Colonic mucosa (tissue), 4 donors: ENCODE measurements at regions of chr11 and their contacts with region 1.

Region 1: GRCh38 chr11:2930704-2931428 is 1.6 kb upstream of the PHLDA2 start:
- DNase-seq: peak; percentile 95
- H3K4me3 ChIP-seq: peak overlapping the region; percentile 81
- H3K27ac ChIP-seq: peak overlapping the region; percentile 88
- H3K4me1 ChIP-seq: peaks cover 5% of the 10 kb centered on the region
- H3K27me3 ChIP-seq: no peaks in the 10 kb centered on the region
- CTCF ChIP-seq: peak; percentile 85

Region 2: GRCh38 chr11:2892215-2893020 is 38.4 kb before region 1 on chr11:
- intact Hi-C with region 1: loop called (anchors 5 kb)
- DNase-seq: peak; percentile 72
- H3K4me3 ChIP-seq: peak overlapping the region; percentile 26
- H3K27ac ChIP-seq: peak overlapping the region; percentile 2
- H3K4me1 ChIP-seq: peaks cover 10% of the 10 kb centered on the region
- H3K27me3 ChIP-seq: no peaks in the 10 kb centered on the region
- CTCF ChIP-seq: peak; percentile 90

Region 3: DNA sequence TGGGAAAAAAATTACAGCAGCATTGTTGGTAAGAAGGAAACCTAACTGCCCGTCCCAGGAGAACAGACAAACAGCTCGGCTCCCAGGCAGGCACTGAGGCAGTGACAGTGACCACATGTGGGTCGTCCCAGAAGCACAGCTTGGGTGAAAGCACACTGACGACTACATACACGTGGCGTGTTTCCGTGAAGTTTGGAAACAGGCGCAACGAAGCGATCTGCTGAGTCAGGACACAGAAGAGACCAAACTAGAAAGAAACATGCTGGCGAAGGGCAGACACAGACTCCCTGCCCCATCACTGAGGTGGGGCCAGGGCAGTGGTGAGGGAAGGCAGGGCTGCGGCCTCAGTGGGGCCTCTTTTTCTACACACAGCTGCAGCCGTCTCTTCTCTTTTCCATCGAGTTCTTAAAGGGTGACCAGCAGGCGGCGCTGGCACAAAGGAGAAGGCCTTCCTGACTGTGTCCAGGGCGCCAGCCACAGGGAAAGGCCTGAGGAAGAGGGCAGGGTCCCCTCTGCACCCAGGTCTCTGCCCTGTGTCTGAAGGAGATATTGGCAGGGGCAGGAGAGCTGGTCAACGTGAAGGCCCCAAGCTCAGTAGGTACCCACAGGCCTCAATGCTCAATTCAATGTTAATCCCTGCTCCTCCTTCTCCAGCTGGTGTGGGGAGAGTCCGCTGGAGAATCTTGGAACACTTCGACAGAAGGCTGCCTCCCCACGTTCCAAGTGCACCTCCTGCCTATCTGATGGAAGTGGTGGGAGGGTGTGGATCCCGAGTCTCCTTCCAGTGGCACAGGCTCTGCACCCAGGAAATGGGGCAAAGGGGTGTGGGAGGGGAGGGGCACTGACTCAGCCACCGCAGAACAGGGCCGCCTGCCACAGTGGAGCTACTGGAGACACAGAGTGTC is 106.4 kb after region 1 on chr11:
- intact Hi-C with region 1: no loop called
- DNase-seq: peak; percentile 85
- H3K4me3 ChIP-seq: no peak overlapping the region
- H3K27ac ChIP-seq: no peak overlapping the region
- H3K4me1 ChIP-seq: no peaks in the 10 kb centered on the region
- H3K27me3 ChIP-seq: no peaks in the 10 kb centered on the region
- CTCF ChIP-seq: peak; percentile 58